Spleen (tissue), 13 donors: ENCODE measurements at regions of chr14 and their contacts with region 1.

Region 1: GRCh38 chr14:99982537-99983250 is 82.5 kb upstream of the EVL start:
- DNase-seq: no peak
- H3K4me3 ChIP-seq: no peak overlapping the region
- H3K27ac ChIP-seq: no peak overlapping the region
- H3K4me1 ChIP-seq: peaks cover 0 to 22% (median 10%) of the 10 kb centered on the region in 6 donors
- H3K27me3 ChIP-seq: no peaks in the 10 kb centered on the region
- CTCF ChIP-seq: peak; percentile 68 to 90 (median 82)
- POLR2A ChIP-seq: no peak

Region 2: DNA sequence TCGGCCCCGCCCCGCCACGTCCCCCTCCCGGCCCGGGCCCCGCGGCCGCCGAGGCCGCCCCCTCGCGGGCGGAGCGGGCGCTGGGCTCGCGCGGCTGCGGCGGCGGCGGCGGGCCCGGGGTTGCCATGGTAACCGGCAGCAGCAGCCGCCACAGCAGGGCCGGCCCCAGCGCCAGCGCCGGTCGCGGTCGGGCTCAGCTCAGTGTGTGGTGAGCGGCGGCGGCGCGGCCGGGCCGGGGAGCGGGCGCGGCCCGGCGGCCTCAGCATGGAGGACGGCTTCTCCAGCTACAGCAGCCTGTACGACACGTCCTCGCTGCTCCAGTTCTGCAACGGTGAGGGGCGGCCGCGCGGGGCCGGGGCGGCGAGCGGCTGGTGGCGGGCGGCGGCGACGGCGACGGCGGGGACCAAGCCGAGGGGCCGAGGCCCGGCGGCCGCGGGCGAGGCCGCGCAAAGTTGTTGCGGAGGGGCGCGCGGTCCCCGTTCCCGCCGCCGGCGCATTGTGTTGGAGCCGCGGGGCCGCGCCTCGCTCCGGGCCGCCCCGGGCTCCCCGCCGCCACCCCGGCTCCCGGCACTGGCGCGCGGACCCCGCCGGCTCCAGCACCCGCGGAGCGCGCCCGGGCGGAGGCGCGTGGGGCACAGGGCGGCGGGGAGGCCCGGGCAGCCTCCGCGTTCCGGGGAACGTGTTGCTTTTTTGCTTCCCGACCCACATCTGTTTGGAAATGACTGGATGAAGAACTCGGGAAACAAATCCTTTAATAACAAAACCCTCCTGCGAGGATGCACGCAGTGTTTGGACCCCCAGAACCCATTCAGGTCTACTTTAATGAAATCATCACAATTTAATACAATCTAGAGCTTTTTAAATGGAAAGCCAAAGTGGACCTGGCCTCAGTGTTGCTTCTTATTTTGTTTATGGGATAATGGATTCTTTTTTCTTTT is 189.2 kb before region 1 on chr14 and contains the start of gene EML1:
- intact Hi-C with region 1: no loop called
- DNase-seq: peak; percentile 91
- H3K4me3 ChIP-seq: peak within 1 kb of the TSS; percentile 26 to 76 (median 39)
- H3K27ac ChIP-seq: peak within 1 kb of the TSS in 7 of 8 donors; percentile 61 to 79 (median 74)
- H3K4me1 ChIP-seq: peaks cover 0 to 38% (median 17%) of the 10 kb centered on the region in 6 donors
- H3K27me3 ChIP-seq: peaks cover 0 to 63% (median 11%) of the 10 kb centered on the region in 7 donors
- CTCF ChIP-seq: no peak
- POLR2A ChIP-seq: no peak
- total RNA-seq, gene EML1: 4.6 to 15.5 (median 6.9) TPM

Region 3: DNA sequence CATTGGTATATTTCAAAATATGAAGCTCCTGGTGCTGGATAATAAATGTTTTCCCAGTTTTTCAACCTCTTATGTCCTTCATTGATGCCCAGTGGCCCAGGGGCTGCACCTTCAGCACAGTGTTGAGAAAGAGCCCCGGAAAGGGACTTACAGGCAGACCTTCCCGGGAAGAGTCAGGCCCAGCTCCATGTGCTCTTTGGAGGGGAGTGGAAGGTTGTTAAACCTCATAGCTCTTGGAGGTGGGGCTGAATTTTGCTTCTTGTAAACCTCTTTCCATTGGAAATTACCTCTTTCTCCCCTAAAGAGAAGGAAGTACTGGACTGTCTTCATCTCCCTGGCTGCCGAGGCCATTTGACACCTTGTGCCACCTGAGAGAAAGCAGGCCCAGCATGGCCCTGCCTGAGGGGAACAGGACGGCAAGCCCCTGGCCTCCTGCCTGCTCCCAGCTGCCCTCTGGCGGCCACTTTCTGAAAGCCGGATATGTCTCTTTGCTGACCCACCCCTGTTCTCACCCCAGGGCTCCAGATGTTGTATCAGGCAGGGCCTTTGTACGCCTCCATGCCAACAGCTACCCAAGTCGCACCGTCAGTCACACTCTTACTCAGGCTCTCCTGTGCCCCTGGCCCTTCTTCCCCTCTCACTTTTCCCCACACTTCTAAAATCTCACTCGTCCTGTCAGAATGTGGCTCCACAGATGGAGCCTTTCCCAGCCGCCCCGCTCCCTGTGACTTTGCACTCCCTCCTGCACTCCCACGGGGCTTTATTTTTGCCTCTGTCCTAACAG is 125.5 kb after region 1 on chr14:
- intact Hi-C with region 1: loop called (anchors 2 kb)
- DNase-seq: peak; percentile 94
- H3K4me3 ChIP-seq: no peak overlapping the region
- H3K27ac ChIP-seq: peak overlapping the region in 5 of 8 donors; percentile 17 to 80 (median 70)
- H3K4me1 ChIP-seq: peaks cover 33 to 81% (median 58%) of the 10 kb centered on the region in 6 donors
- H3K27me3 ChIP-seq: no peaks in the 10 kb centered on the region
- CTCF ChIP-seq: peak; percentile 66 to 90 (median 83)
- POLR2A ChIP-seq: no peak

Region 4: DNA sequence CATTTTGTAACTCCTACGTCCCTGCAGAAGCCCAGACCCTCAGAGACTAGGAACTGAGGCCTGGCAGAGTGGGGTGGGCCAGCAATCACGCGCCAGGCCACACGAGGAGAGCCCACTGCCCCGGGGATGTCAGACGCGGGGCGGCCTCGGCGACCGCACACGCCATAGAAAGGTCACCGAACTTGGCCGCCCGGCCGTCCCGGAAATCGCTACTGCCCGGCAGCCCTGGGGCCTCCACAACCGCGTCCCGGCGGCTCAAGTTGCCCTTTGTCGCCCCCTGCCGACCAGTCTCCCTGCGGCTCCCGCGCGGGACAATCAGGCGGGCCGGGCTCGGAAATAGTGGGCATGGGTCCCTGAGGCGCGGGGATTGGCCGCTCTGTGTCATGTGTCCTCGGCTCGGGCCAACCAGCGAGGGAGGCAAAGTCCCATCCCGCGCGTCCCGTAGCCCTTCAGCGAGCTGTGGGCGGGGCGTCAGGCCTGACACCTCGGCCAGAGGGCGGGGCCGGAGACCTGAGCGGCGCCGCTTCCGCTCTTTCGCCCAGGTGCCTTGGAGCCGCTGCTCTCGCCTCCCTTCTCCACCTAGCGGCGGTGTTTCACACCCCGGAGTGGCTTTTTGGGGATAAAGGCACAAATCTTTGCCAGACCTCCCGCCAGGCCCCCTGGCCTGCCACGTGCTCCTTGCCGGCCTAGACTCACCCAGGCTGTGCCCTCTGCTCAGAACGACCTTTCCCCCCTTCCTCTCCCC is 210.2 kb after region 1 on chr14:
- intact Hi-C with region 1: loop called (anchors 5 kb)
- DNase-seq: peak; percentile 100
- H3K4me3 ChIP-seq: peak overlapping the region; percentile 10 to 64 (median 32)
- H3K27ac ChIP-seq: peak overlapping the region; percentile 70 to 94 (median 92)
- H3K4me1 ChIP-seq: peaks cover 3 to 23% (median 17%) of the 10 kb centered on the region in 6 donors
- H3K27me3 ChIP-seq: no peaks in the 10 kb centered on the region
- CTCF ChIP-seq: peak; percentile 95 to 100 (median 99)
- POLR2A ChIP-seq: no peak

Region 5: GRCh38 chr14:100213956-100214774 is 231.5 kb after region 1 on chr14:
- intact Hi-C with region 1: no loop called
- DNase-seq: peak; percentile 99
- H3K4me3 ChIP-seq: peak overlapping the region; percentile 58 to 95 (median 72)
- H3K27ac ChIP-seq: peak overlapping the region; percentile 95 to 100 (median 98)
- H3K4me1 ChIP-seq: peaks cover 8 to 26% (median 21%) of the 10 kb centered on the region in 6 donors
- H3K27me3 ChIP-seq: no peaks in the 10 kb centered on the region
- CTCF ChIP-seq: peak in 1 of 11 experiments; percentile 11
- POLR2A ChIP-seq: peak; percentile 37 to 73 (median 53)